Right cardiac atrium (tissue), 5 donors: ENCODE measurements at regions of chr9 and their contacts with region 1.

Region 1: GRCh38 chr9:101727612-101728524 is 10.6 kb downstream of the GRIN3A start:
- DNase-seq: peak in 1 of 3 donors; percentile 20
- ATAC-seq: no peak
- H3K4me3 ChIP-seq: no peak overlapping the region
- H3K27ac ChIP-seq: no peak overlapping the region
- H3K4me1 ChIP-seq: no peaks in the 10 kb centered on the region
- H3K27me3 ChIP-seq: no peaks in the 10 kb centered on the region

Region 2: GRCh38 chr9:101427957-101428655 is 299.8 kb before region 1 on chr9:
- intact Hi-C with region 1: no loop called
- DNase-seq: no peak
- ATAC-seq: no peak
- H3K4me3 ChIP-seq: no peak overlapping the region
- H3K27ac ChIP-seq: no peak overlapping the region
- H3K4me1 ChIP-seq: no peaks in the 10 kb centered on the region
- H3K27me3 ChIP-seq: no peaks in the 10 kb centered on the region

Region 3: GRCh38 chr9:101601904-101602765 is 125.7 kb before region 1 on chr9:
- intact Hi-C with region 1: loop called in 2 of 4 experiments (anchors 5 to 10 kb)
- DNase-seq: no peak
- ATAC-seq: peak; percentile 34 to 45
- H3K4me3 ChIP-seq: no peak overlapping the region
- H3K27ac ChIP-seq: no peak overlapping the region
- H3K4me1 ChIP-seq: no peaks in the 10 kb centered on the region
- H3K27me3 ChIP-seq: no peaks in the 10 kb centered on the region

Region 4: GRCh38 chr9:101999441-101999840 is 271.6 kb after region 1 on chr9:
- intact Hi-C with region 1: no loop called
- DNase-seq: no peak
- ATAC-seq: no peak
- H3K4me3 ChIP-seq: no peak overlapping the region
- H3K27ac ChIP-seq: no peak overlapping the region
- H3K4me1 ChIP-seq: no peaks in the 10 kb centered on the region
- H3K27me3 ChIP-seq: no peaks in the 10 kb centered on the region